ENCODE measurements at regions of chr3 and their contacts with region 1.

Region 1: DNA sequence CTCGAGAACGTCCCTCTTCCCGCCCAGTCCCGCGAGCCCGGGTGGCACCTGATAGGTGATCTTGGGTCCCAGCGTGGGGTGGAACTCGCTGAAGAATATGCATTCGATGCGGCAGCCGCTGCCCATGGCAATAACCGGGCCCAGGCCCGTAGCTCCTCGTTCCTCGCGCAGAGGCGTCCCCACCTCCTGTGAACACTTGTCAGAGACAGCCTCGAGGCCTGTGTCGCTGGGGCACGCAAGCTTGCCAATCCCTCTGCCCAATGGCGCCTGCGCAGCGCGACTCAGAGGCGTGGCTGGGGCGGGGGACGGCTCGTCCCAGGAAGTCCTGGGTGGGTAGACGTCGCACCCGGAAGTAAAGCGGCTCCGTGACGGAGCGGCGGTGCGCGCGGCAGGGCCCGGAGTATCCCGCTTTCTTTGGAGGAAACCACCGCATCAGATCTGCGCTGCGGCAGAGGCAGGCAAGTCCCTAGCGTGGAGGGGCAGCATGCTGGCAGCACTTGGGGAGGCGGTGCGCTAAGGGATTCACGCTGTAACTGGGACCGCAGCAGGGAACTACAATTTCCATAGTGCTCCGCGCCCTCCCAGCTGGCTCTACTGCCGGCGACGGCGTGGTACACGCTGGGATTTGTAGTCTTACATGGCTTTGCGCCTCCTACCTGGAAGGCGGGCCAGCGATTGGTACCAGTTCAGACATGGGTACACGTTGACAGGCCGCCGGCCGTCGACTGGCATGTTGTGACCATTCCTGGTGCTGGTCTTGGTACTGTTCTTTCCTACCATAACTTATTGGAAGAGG is at the starts of genes CYB561D2 and NPRL2:
- DNase-seq: peak; percentile 100
- H3K4me3 Mint-ChIP-seq: peak within 1 kb of the TSS; percentile 80
- H3K27ac Mint-ChIP-seq: peak within 1 kb of the TSS; percentile 95
- H3K4me1 Mint-ChIP-seq: peaks cover 68% of the 10 kb centered on the region
- H3K27me3 Mint-ChIP-seq: no peaks in the 10 kb centered on the region

Region 2: GRCh38 chr3:50337191-50337841 is 13.4 kb before region 1 on chr3:
- CTCF ChIA-PET with region 1: interaction called, 11 read pairs
- DNase-seq: peak; percentile 98
- H3K4me3 Mint-ChIP-seq: peak overlapping the region; percentile 80
- H3K27ac Mint-ChIP-seq: peak overlapping the region; percentile 97
- H3K4me1 Mint-ChIP-seq: peaks cover 66% of the 10 kb centered on the region
- H3K27me3 Mint-ChIP-seq: no peaks in the 10 kb centered on the region

Region 3: GRCh38 chr3:50550079-50550741 is 199.5 kb after region 1 on chr3:
- CTCF ChIA-PET with region 1: interaction called, 10 read pairs
- DNase-seq: peak; percentile 79
- H3K4me3 Mint-ChIP-seq: no peak overlapping the region
- H3K27ac Mint-ChIP-seq: no peak overlapping the region
- H3K4me1 Mint-ChIP-seq: peaks cover 9% of the 10 kb centered on the region
- H3K27me3 Mint-ChIP-seq: peaks cover 46% of the 10 kb centered on the region